Upper lobe of right lung (tissue), 1 donor: ENCODE measurements at regions of chr2 and their contacts with region 1.

Region 1: DNA sequence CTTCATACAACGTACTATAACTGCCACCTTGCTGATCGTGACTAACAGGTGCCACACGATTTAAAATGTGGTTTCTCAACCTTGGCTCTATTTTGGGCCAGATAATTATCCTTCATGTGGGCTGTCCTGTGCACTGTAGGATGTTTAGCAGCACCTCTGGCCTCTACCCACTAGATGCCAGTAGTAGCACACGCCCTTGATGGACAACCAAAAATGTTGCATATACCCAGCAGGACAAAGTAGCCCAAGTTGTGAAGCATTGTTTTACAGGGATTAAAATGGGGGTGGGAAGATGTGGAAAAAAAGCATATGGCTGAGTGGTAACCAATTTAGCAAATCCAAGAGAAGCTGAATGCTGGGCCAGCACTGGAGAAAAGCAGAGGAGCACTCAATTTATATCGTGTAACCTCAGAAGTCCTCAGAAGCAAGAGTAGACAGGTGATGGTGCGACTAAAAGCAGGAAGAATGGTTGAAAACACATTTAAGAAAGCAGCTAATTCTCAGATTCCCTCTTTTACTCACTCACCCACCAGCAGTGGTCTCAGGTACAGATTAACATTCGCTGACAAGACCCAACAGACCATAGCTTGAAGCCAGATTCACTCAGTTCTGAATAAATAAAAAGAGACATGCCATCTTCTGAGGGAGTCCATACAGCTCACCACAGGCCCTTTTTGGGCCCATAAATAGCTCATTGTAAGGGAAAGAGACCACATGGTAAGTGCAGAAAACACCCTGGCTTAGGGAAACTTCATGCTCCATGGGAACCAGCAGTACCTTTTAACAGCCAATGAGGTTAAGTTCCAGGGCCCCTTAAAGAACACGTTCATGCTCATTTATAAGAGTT is 50.6 kb downstream of the RAPH1 start:
- DNase-seq: no peak
- ATAC-seq: peak; percentile 88
- H3K4me3 ChIP-seq: no peak overlapping the region
- H3K27ac ChIP-seq: no peak overlapping the region
- H3K4me1 ChIP-seq: peaks cover 4% of the 10 kb centered on the region
- H3K27me3 ChIP-seq: no peaks in the 10 kb centered on the region
- CTCF ChIP-seq: peak; percentile 62

Region 2: GRCh38 chr2:203578759-203579643 is 94.5 kb after region 1 on chr2:
- intact Hi-C with region 1: no loop called
- DNase-seq: no peak
- ATAC-seq: peak; percentile 96
- H3K4me3 ChIP-seq: no peak overlapping the region
- H3K27ac ChIP-seq: peak overlapping the region; percentile 71
- H3K4me1 ChIP-seq: peaks cover 19% of the 10 kb centered on the region
- H3K27me3 ChIP-seq: no peaks in the 10 kb centered on the region
- CTCF ChIP-seq: no peak

Region 3: DNA sequence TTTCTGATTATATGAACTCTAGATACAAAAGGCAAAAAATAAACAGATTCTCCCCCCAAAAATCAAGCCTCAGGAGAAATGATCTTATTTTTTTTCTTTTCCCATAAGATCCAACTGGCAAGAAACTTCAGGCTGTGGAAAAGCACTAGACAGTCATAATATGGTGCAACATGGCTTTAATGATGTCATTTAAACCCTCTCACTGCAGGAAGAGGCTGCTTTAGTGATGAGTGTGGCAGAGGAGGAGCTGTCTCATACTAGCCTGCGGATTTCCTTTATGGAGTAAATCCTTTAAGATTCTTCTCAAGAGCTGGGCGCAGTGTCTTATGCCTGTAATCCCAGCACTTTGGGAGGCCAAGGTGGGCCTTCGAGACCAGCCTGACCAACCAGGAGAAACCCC is 138.6 kb after region 1 on chr2:
- intact Hi-C with region 1: no loop called
- DNase-seq: no peak
- ATAC-seq: no peak
- H3K4me3 ChIP-seq: no peak overlapping the region
- H3K27ac ChIP-seq: no peak overlapping the region
- H3K4me1 ChIP-seq: peaks cover 6% of the 10 kb centered on the region
- H3K27me3 ChIP-seq: no peaks in the 10 kb centered on the region
- CTCF ChIP-seq: no peak

Region 4: GRCh38 chr2:203814661-203815540 is 330.4 kb after region 1 on chr2:
- intact Hi-C with region 1: loop called (anchors 10 kb)
- DNase-seq: peak; percentile 73
- ATAC-seq: peak; percentile 86
- H3K4me3 ChIP-seq: no peak overlapping the region
- H3K27ac ChIP-seq: no peak overlapping the region
- H3K4me1 ChIP-seq: peaks cover 24% of the 10 kb centered on the region
- H3K27me3 ChIP-seq: no peaks in the 10 kb centered on the region
- CTCF ChIP-seq: peak; percentile 85